ENCODE measurements at regions of chr7 and their contacts with region 1.

Region 1: GRCh38 chr7:70693686-70694360 is 438.1 kb upstream of the GALNT17 start:
- DNase-seq: peak; percentile 56 to 72 (median 70)
- H3K4me3 ChIP-seq: no peak overlapping the region
- H3K4me3 Mint-ChIP-seq: peak overlapping the region; percentile 74 to 90 (median 81)
- H3K27ac ChIP-seq: no peak overlapping the region
- H3K27ac Mint-ChIP-seq: peak overlapping the region; percentile 35 to 92 (median 84)
- H3K4me1 ChIP-seq: peaks cover 5% of the 10 kb centered on the region
- H3K4me1 Mint-ChIP-seq: peaks cover 8 to 40% (median 24%) of the 10 kb centered on the region in 4 donors
- H3K27me3 ChIP-seq: no peaks in the 10 kb centered on the region
- H3K27me3 Mint-ChIP-seq: peaks cover 12% of the 10 kb centered on the region in 2 donors

Region 2: DNA sequence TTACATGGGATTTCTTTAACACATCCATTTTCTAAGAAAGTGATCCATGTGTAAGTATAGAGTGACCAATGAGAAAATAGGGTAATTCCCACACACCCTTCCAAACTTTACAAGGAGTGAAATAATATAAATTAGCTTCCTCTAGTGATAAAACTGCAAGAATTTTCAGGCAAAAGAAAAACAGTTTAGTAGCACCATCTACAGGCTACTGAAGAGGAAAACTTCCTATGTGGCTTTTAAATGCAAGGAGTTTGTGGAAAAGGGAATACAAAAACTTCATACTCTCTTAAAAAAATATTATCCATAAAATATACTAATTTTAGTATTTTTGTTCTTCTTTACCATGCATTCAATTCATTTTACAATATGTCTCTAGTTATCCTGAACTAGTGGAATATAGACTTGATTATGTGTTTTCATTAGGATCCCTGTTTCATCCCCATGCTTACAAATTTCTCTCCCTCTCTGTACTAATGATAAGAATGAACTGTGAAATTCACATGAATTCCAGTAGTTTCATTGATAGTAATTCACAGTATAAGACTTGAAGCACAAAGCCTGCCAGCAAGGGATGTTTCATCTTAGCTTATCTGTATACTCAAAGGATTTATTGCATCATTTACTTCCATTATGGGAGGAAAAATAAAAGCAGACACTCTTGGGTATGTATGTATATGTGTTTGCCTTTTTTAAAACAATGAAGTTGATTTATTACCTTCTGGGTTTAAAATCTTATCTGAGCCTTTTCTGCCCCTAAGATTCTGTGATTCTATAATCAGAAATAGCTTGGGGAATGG is 652.7 kb before region 1 on chr7:
- CTCF ChIA-PET with region 1: interaction called, 12 read pairs
- POLR2A ChIA-PET with region 1: no interaction called
- intact Hi-C with region 1: no loop called
- DNase-seq: no peak
- H3K4me3 ChIP-seq: no peak overlapping the region
- H3K4me3 Mint-ChIP-seq: no peak overlapping the region
- H3K27ac ChIP-seq: no peak overlapping the region
- H3K27ac Mint-ChIP-seq: no peak overlapping the region
- H3K4me1 ChIP-seq: no peaks in the 10 kb centered on the region
- H3K4me1 Mint-ChIP-seq: no peaks in the 10 kb centered on the region
- H3K27me3 ChIP-seq: no peaks in the 10 kb centered on the region
- H3K27me3 Mint-ChIP-seq: no peaks in the 10 kb centered on the region

Region 3: DNA sequence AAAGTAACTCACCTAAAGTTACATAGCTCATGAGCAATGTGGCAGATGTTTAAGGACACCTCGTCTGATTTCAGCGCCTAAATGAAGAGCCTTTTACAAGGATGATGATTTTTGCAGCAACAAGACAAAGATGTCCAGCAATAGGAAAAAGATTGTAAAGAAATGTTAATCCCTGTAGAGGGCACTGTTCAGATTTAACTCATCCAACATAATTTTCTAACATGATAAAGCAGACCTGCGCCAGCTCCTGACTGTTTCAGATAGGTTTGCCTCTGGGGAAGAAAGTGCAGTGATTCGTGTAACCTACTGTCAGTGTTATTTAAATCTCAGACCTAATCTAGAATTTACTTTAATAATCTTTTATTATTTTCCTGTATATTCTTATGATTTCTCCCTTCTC is 500.3 kb before region 1 on chr7:
- CTCF ChIA-PET with region 1: interaction called, 10 read pairs
- POLR2A ChIA-PET with region 1: no interaction called
- intact Hi-C with region 1: no loop called
- DNase-seq: peak in 4 of 5 donors; percentile 16 to 34 (median 22)
- H3K4me3 ChIP-seq: no peak overlapping the region
- H3K4me3 Mint-ChIP-seq: no peak overlapping the region
- H3K27ac ChIP-seq: no peak overlapping the region
- H3K27ac Mint-ChIP-seq: no peak overlapping the region
- H3K4me1 ChIP-seq: no peaks in the 10 kb centered on the region
- H3K4me1 Mint-ChIP-seq: no peaks in the 10 kb centered on the region
- H3K27me3 ChIP-seq: no peaks in the 10 kb centered on the region
- H3K27me3 Mint-ChIP-seq: peaks cover 0 to 2% of the 10 kb centered on the region in 2 donors

Region 4: DNA sequence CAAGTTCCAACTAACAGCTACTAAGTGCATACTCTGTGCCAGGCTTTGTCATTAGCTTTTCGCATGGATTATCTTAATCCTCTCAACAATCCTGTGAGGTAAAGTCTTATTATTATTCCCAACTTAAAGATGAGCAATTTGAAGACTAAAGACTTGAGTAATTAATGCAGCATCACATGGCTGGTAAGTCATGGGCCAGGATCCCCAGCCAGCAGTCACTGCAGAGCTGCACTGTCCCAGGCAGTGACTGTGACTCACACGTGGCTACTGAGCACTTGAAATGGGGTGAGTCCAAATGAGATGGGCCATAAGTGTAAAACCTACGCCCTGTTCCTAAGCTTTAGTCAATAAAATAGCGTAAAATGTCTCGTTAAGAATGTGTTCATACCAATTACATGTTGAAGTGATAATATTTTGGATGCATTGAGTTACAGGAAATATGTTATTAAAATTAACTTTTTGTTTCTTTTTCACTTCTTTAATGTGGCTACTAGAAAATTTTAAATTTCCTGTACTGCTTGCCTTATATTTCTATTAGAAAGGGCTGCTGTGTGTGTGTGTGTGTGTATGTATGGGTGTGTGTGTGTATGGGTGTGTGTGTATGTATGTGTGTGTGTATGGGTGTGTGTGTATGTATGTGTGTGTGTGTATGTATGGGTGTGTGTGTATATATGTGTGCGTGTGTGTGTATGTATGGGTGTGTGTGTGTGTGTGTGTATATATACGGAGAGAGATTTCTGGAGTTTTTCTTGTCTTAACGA is 339.2 kb before region 1 on chr7:
- CTCF ChIA-PET with region 1: no interaction called
- POLR2A ChIA-PET with region 1: no interaction called
- intact Hi-C with region 1: no loop called
- DNase-seq: peak in 4 of 5 donors; percentile 9 to 42 (median 25)
- H3K4me3 ChIP-seq: no peak overlapping the region
- H3K4me3 Mint-ChIP-seq: peak overlapping the region in 6 of 8 donors; percentile 4 to 76 (median 51)
- H3K27ac ChIP-seq: no peak overlapping the region
- H3K27ac Mint-ChIP-seq: peak overlapping the region in 6 of 7 donors; percentile 25 to 85 (median 72)
- H3K4me1 ChIP-seq: peaks cover 16% of the 10 kb centered on the region
- H3K4me1 Mint-ChIP-seq: peaks cover 5 to 29% (median 12%) of the 10 kb centered on the region in 4 donors
- H3K27me3 ChIP-seq: no peaks in the 10 kb centered on the region
- H3K27me3 Mint-ChIP-seq: no peaks in the 10 kb centered on the region

Region 5: GRCh38 chr7:70595753-70596597 is 97.8 kb before region 1 on chr7:
- CTCF ChIA-PET with region 1: interaction called, 3 read pairs
- POLR2A ChIA-PET with region 1: interaction called, 3 read pairs
- intact Hi-C with region 1: loop called (anchors 10 kb)
- DNase-seq: peak in 4 of 5 donors; percentile 3 to 29 (median 16)
- H3K4me3 ChIP-seq: no peak overlapping the region
- H3K4me3 Mint-ChIP-seq: peak overlapping the region in 7 of 8 donors; percentile 49 to 78 (median 69)
- H3K27ac ChIP-seq: no peak overlapping the region
- H3K27ac Mint-ChIP-seq: no peak overlapping the region
- H3K4me1 ChIP-seq: peaks cover 5% of the 10 kb centered on the region
- H3K4me1 Mint-ChIP-seq: peaks cover 1 to 9% (median 7%) of the 10 kb centered on the region in 4 donors
- H3K27me3 ChIP-seq: no peaks in the 10 kb centered on the region
- H3K27me3 Mint-ChIP-seq: peaks cover 23 to 27% of the 10 kb centered on the region in 2 donors

Region 6: GRCh38 chr7:70660154-70660818 is 33.5 kb before region 1 on chr7:
- CTCF ChIA-PET with region 1: interaction called, 6 read pairs
- POLR2A ChIA-PET with region 1: interaction called, 12 read pairs
- intact Hi-C with region 1: no loop called
- DNase-seq: peak; percentile 57 to 75 (median 71)
- H3K4me3 ChIP-seq: no peak overlapping the region
- H3K4me3 Mint-ChIP-seq: peak overlapping the region in 3 of 8 donors; percentile 26 to 44 (median 33)
- H3K27ac ChIP-seq: no peak overlapping the region
- H3K27ac Mint-ChIP-seq: peak overlapping the region; percentile 40 to 94 (median 89)
- H3K4me1 ChIP-seq: peaks cover 22% of the 10 kb centered on the region
- H3K4me1 Mint-ChIP-seq: peaks cover 9 to 25% (median 20%) of the 10 kb centered on the region in 4 donors
- H3K27me3 ChIP-seq: no peaks in the 10 kb centered on the region
- H3K27me3 Mint-ChIP-seq: no peaks in the 10 kb centered on the region

Region 7: GRCh38 chr7:70710011-70710480 is 16.2 kb after region 1 on chr7:
- CTCF ChIA-PET with region 1: interaction called, 14 read pairs
- POLR2A ChIA-PET with region 1: interaction called, 3 read pairs
- intact Hi-C with region 1: no loop called
- DNase-seq: no peak
- H3K4me3 ChIP-seq: no peak overlapping the region
- H3K4me3 Mint-ChIP-seq: peak overlapping the region in 1 of 8 donors; percentile 20
- H3K27ac ChIP-seq: no peak overlapping the region
- H3K27ac Mint-ChIP-seq: peak overlapping the region; percentile 2 to 67 (median 50)
- H3K4me1 ChIP-seq: no peaks in the 10 kb centered on the region
- H3K4me1 Mint-ChIP-seq: peaks cover 8 to 42% (median 22%) of the 10 kb centered on the region in 4 donors
- H3K27me3 ChIP-seq: no peaks in the 10 kb centered on the region
- H3K27me3 Mint-ChIP-seq: no peaks in the 10 kb centered on the region

Measured in CD4-positive, alpha-beta memory T cell (primary cell).